IMR-90 (cell line): ENCODE measurements at regions of chr12 and their contacts with region 1.

Region 1: GRCh38 chr12:4460761-4461160 is 15.1 kb upstream of the FGF6 start:
- DNase-seq: no peak
- ATAC-seq: no peak
- H3K4me3 ChIP-seq: no peak overlapping the region
- H3K27ac ChIP-seq: no peak overlapping the region
- H3K4me1 ChIP-seq: no peaks in the 10 kb centered on the region
- H3K27me3 ChIP-seq: no peaks in the 10 kb centered on the region
- CTCF ChIP-seq: no peak
- POLR2A ChIP-seq: no peak
- RAD21 ChIP-seq: no peak

Region 2: GRCh38 chr12:4327293-4327692 is 133.5 kb before region 1 on chr12:
- CTCF ChIA-PET with region 1: no interaction called
- POLR2A ChIA-PET with region 1: interaction called, 18 read pairs
- dilution Hi-C with region 1: no loop called
- in situ Hi-C with region 1: no loop called
- intact Hi-C with region 1: no loop called
- DNase-seq: no peak
- ATAC-seq: no peak
- H3K4me3 ChIP-seq: no peak overlapping the region
- H3K27ac ChIP-seq: no peak overlapping the region
- H3K4me1 ChIP-seq: no peaks in the 10 kb centered on the region
- H3K27me3 ChIP-seq: no peaks in the 10 kb centered on the region
- CTCF ChIP-seq: no peak
- POLR2A ChIP-seq: no peak
- RAD21 ChIP-seq: no peak